Left ventricle myocardium superior (tissue), 1 donor: ENCODE measurements at regions of chr16 and their contacts with region 1.

Region 1: DNA sequence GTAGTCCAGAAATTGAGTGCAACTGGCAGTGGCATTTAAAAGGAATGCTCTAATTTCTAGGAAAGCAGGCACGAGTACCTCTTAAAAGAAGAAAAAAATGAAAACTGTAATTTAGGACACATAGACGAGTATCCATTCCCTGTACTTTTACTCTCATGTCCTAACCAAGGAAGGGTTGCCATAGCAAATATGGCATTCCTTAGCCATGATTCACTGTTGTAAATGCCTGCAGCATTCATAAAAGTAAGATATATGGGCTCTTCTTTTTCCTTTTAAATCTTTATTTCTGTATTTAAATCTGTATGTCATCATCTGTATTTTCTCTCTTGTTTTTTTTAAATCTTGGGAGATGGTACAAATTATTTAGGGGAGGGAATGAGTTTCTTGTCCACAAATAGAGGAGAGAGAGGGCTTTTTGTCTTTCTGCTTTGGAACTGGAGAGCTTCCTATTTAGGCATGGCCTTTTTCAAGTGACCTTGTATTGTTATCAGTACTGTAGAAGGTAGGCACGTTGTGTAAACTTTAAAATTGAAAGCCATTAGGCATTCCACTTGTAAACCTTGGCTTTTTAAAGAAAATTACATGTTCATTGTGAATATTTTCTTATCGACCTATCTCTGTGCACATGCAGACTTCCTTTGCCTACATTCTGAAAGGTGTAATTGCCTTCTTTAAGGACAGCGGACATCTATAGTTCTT is 50.0 kb downstream of the TENT4B start:
- DNase-seq: no peak
- ATAC-seq: peak; percentile 50

Region 2: GRCh38 chr16:50121721-50122445 is 81.2 kb before region 1 on chr16:
- intact Hi-C with region 1: no loop called
- DNase-seq: no peak
- ATAC-seq: no peak

Region 3: GRCh38 chr16:50152807-50153452 is 50.1 kb before region 1 on chr16 and contains the start of gene TENT4B:
- intact Hi-C with region 1: loop called (anchors 10 kb)
- DNase-seq: peak; percentile 92
- ATAC-seq: peak; percentile 95
- total RNA-seq, gene TENT4B: 7.8 TPM

Region 4: DNA sequence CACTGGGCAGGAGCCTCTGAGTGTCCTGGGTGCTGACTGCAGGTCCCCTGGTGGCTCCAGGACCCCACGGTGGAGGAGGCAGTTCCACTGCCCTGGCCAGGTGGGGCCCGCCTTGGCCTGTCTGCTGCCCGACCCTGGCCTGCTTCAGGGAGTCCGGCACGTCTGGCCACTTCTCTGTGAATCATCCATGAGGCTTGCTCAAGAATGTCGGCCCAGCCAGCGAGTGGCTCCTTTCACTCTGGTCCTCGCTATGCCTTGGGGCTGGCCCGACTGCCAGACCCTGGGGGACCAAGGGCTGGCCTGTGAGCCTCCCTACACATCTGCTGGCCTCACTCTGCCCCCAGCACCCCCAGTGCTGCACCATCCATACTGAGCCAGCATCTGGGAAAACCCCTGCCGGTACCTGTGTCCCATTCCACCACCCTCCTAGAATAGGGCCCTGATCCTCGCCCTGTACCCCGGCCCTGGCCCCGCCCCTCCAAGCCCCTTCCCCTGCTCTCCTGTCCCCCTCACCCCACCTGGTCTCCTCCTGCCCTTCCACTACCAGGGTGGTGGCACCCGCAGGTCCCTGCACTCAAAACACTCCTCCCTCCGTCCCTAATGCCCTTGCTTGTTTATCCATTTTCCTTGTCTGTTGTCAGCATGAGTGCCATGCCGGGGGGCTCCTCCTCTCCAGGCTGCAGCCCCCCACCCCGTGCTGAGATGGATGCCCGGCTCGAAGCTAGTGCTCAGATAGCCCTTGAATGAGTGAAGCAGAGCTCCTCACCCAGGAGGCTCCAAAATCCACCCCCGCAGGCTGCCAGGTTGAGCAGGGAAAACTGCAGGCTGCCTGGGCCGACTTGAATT is 98.8 kb after region 1 on chr16:
- intact Hi-C with region 1: no loop called
- DNase-seq: peak; percentile 26
- ATAC-seq: no peak